Heart left ventricle (tissue), 16 donors: ENCODE measurements at regions of chr3 and their contacts with region 1.

Region 1: GRCh38 chr3:115085197-115085865 is 61.8 kb downstream of the ZBTB20 start:
- DNase-seq: no peak
- ATAC-seq: peak; percentile 54 to 73 (median 66)
- H3K4me3 ChIP-seq: no peak overlapping the region
- H3K27ac ChIP-seq: peak overlapping the region in 3 of 12 donors; percentile 7 to 19 (median 16)
- H3K4me1 ChIP-seq: peaks cover 0 to 62% (median 21%) of the 10 kb centered on the region in 12 donors
- H3K27me3 ChIP-seq: no peaks in the 10 kb centered on the region
- CTCF ChIP-seq: peak in 7 of 12 donors; percentile 6 to 42 (median 22)
- POLR2A ChIP-seq: no peak

Region 2: DNA sequence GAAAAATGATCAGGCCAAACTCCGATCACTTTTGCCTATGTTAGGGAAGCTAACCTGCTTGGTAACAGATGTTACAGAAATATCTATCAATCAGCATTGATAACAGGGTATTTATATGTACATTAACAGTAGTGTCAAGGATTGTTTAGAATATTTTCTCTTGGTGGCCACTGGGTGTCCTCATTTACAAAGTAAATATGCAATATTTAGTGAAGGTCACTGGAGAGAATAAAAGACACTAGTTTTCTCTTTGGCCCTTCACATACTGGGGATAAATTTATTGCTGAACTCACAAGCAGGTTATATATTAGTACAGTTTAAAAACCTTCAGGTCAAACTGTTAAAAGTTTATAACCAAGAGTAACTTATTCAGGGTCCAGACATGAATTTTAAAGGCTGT is 722.5 kb before region 1 on chr3:
- intact Hi-C with region 1: loop called in 3 of 10 experiments (anchors 5 to 10 kb)
- DNase-seq: no peak
- ATAC-seq: peak in 3 of 4 donors; percentile 29 to 65 (median 54)
- H3K4me3 ChIP-seq: no peak overlapping the region
- H3K27ac ChIP-seq: peak overlapping the region in 10 of 12 donors; percentile 47 to 80 (median 72)
- H3K4me1 ChIP-seq: peaks cover 0 to 50% (median 33%) of the 10 kb centered on the region in 12 donors
- H3K27me3 ChIP-seq: no peaks in the 10 kb centered on the region
- CTCF ChIP-seq: peak in 10 of 12 donors; percentile 33 to 59 (median 48)
- POLR2A ChIP-seq: no peak

Region 3: DNA sequence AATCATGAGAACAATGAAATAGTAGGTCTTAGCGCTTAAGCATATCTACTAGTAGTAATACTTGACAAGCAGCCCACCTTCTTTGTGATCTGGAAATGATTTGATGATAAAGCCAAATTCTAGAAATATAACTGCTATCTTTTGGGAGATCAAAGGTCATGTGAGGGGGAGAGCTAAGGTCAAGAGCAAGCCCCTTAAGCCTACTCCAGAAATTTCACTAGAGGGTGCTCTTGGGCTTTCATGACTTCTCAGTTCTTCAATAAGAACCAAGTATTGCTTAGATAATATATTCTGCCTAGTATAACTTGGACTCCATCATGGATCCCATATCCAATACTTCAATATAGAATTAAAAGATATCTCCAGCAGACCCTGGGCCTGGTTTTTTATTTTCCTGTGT is 257.8 kb before region 1 on chr3:
- intact Hi-C with region 1: loop called in 7 of 10 experiments (anchors 5 to 10 kb)
- DNase-seq: no peak
- ATAC-seq: peak in 3 of 4 donors; percentile 66 to 68 (median 67)
- H3K4me3 ChIP-seq: no peak overlapping the region
- H3K27ac ChIP-seq: no peak overlapping the region
- H3K4me1 ChIP-seq: peaks cover 0 to 6% (median 0%) of the 10 kb centered on the region in 12 donors
- H3K27me3 ChIP-seq: no peaks in the 10 kb centered on the region
- CTCF ChIP-seq: peak; percentile 49 to 80 (median 66)
- POLR2A ChIP-seq: no peak

Region 4: DNA sequence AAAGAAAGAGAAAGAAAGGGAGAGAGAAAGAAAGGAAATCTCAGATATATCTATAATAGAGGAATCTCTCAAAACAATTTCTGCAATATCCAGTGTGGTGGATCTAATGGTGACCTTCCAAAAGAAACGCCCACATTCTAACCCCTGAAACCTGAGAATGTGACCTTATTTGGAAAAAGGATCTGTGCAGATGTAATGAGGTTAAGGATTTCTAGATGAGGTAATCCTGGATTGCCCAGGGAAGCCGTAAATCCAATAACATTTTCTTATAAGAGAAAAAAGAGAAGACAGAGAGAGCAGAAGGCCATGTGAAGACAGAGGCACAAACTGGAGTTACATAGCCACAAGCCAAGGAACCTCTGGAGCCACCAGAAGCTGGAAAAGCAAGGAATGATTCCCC is 245.9 kb before region 1 on chr3:
- intact Hi-C with region 1: loop called in 1 of 10 experiments (anchors 10 kb)
- DNase-seq: no peak
- ATAC-seq: no peak
- H3K4me3 ChIP-seq: no peak overlapping the region
- H3K27ac ChIP-seq: no peak overlapping the region
- H3K4me1 ChIP-seq: peaks cover 0 to 4% (median 0%) of the 10 kb centered on the region in 12 donors
- H3K27me3 ChIP-seq: no peaks in the 10 kb centered on the region
- CTCF ChIP-seq: no peak
- POLR2A ChIP-seq: no peak

Region 5: DNA sequence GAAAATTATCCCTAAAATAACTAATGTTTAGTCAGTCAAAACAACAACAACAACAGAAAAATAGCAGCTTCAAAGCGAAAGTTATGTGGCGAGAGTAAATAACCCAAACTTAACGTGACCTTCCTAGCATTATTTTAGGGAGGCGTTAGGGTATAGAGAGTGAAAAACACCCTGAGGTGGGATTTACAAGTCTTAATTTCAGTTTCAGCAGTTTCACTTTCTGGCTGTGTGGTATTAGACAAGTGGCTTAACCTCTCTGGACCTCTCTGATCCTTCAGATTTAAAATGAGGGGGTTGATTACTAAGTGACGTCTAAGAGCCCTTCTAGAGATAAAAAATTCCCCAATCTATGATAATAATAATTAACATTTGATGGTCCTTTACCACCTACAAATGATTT is 229.5 kb before region 1 on chr3:
- intact Hi-C with region 1: no loop called
- DNase-seq: no peak
- ATAC-seq: no peak
- H3K4me3 ChIP-seq: no peak overlapping the region
- H3K27ac ChIP-seq: no peak overlapping the region
- H3K4me1 ChIP-seq: peaks cover 0 to 33% (median 5%) of the 10 kb centered on the region in 12 donors
- H3K27me3 ChIP-seq: no peaks in the 10 kb centered on the region
- CTCF ChIP-seq: no peak
- POLR2A ChIP-seq: no peak